GM13977 (cell line): ENCODE measurements at regions of chr9 and their contacts with region 1.

Region 1: DNA sequence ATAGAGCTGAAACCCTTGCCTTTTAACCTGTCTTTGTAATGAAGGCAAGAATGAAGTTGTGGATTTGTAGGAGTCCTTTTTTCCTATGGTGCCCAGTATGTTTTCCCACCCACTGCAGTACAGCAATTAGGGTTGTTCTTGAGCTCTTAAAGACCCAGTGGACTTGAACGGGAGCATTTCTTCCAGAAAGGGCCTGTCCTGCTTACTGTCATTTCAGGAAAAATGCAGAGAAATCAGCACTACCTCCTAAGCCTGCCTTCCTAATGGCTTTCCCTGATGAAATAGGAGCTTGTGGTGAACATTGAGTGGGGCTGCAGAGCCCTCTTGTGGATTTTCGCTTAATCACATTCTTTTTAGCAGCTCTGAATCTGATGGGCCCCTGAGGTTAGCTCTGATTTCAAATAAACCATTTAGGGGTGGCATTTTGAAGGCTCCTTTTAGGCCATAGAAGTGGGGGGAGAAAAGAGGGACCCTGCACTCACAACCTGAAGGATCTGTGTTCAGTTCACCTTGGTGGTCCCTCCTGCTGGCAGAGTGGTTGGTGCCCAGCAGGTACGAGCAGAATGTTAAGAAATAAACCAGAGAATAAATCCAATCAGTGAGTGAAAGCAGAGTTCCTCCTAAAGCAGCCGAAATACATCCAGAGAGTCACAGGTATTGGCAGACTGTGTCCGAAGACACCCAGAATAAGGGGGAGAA is 188.0 kb upstream of the KLF9 start:
- DNase-seq: peak; percentile 44
- CTCF ChIP-seq: peak; percentile 78

Region 2: GRCh38 chr9:70347046-70347445 is 255.4 kb before region 1 on chr9:
- in situ Hi-C with region 1: loop called (anchors 5 kb)
- DNase-seq: no peak
- CTCF ChIP-seq: no peak

Region 3: DNA sequence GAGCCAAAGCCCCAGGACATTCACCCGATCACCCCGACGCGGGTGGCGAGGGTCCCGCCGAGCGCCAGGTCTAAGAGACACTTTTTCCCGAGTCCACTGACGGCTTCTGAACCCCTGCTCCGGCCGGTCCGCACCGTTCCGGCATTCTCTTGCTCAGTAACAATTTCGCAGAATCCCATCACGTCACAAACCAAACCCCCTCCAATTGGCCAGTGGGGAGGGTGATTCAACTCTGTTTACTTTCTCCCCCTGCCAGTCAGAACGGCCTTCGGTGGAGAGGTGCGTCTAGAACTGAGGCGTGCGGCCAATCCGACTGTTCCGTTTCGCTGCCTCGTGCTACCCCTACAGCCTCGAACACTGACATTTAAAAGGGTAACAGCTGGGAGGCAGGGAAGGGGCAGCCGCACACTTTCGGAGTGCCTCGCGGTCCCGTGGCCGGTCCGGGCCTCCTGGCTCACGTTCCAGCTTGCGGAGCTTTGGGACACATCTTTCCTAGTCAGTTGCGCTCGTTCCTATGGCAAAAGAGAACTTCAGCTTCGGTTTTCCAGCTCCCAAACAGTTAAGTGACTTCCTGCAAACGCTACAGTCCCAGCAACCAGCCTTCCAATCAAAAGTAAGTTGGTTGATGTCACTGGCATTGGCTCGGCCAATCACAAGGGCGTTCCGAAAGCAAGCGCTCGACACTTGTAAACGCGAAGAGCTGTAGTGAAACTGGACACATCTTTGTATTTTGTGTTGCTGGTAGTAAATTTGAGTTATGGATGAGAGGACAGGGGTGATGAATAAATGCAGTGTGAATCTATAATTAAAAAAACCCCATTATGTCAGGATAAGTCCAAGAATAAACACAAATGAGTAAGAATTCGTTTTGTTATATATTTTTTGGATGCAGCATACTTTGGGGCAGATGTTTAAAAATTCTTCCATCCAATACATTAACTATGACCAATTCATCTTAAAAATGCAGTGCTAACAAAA is 188.4 kb before region 1 on chr9 and contains the start of gene KLF9:
- in situ Hi-C with region 1: no loop called
- DNase-seq: peak; percentile 92
- CTCF ChIP-seq: no peak

Region 4: GRCh38 chr9:71243951-71244350 is 641.5 kb after region 1 on chr9:
- in situ Hi-C with region 1: no loop called
- DNase-seq: no peak
- CTCF ChIP-seq: no peak